GM12878 (cell line): ENCODE measurements at regions of chr4 and their contacts with region 1.

Region 1: DNA sequence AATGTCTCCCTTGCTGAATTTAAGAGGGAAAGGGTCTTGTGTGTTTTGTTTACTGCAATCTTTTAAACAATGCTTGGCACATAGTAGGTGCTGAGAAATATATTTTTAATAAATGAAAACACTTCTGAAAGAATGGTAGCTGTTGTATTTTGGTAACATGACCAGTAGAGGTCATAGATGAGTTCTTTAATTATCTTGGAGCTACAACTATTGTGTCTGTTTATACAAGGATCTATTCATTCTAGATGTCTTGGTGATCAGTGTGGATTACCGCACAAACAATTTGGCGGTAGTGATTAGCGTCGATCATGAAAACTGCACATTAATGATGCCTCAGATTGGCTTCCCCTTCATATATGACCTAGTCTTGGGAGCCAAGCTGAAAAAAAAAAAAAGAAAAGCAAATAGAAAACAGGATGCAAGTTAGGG is 21.4 kb upstream of the SCRG1 start:
- DNase-seq: no peak
- ATAC-seq: peak; percentile 71
- H3K4me3 ChIP-seq: no peak overlapping the region
- H3K27ac ChIP-seq: no peak overlapping the region
- H3K4me1 ChIP-seq: no peaks in the 10 kb centered on the region
- H3K27me3 ChIP-seq: no peaks in the 10 kb centered on the region
- CTCF ChIP-seq: peak; percentile 21 to 48 (median 39); a peak in 2 of 6 replicates
- EP300 ChIP-seq: no peak
- POLR2A ChIP-seq: no peak
- RAD21 ChIP-seq: peak; percentile 57

Region 2: DNA sequence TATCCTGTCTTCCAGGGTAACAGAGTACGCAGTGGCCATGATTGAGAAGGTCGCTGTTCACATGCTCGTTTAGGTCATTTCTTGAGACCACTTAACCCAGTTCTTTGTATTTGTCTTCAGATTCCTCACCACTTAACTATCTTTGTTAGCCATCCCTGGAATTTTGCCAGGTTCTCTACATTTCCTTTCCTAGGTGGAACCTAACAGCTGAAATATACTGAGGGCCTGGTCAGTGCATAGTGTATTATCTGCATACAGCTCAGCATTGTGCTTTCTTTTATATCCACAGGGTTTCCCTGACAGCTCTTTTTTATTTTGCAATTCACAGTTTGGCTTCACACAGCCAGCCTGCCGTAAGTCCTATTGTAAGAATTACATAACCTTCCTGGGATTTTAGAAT is 400.6 kb before region 1 on chr4:
- CTCF ChIA-PET with region 1: interaction called, 15 read pairs
- POLR2A ChIA-PET with region 1: no interaction called
- RAD21 ChIA-PET with region 1: interaction called, 4 read pairs
- SMC1A ChIA-PET with region 1: interaction called, 4 read pairs
- in situ Hi-C with region 1: loop called (anchors 5 kb)
- intact Hi-C with region 1: loop called (anchors 1 kb)
- DNase-seq: no peak
- ATAC-seq: no peak
- H3K4me3 ChIP-seq: no peak overlapping the region
- H3K27ac ChIP-seq: no peak overlapping the region
- H3K4me1 ChIP-seq: no peaks in the 10 kb centered on the region
- H3K27me3 ChIP-seq: no peaks in the 10 kb centered on the region; a peak in 1 of 4 replicates
- CTCF ChIP-seq: no peak
- EP300 ChIP-seq: no peak
- POLR2A ChIP-seq: no peak
- RAD21 ChIP-seq: no peak

Region 3: GRCh38 chr4:173288296-173288695 is 132.0 kb before region 1 on chr4:
- CTCF ChIA-PET with region 1: interaction called, 9 read pairs
- POLR2A ChIA-PET with region 1: no interaction called
- RAD21 ChIA-PET with region 1: interaction called, 4 read pairs
- SMC1A ChIA-PET with region 1: interaction called, 7 read pairs
- in situ Hi-C with region 1: no loop called
- intact Hi-C with region 1: loop called (anchors 1 kb)
- DNase-seq: peak; percentile 24
- ATAC-seq: peak; percentile 88
- H3K4me3 ChIP-seq: no peak overlapping the region
- H3K27ac ChIP-seq: no peak overlapping the region
- H3K4me1 ChIP-seq: peaks cover 5% of the 10 kb centered on the region; the same call in 1 of the 2 replicates
- H3K27me3 ChIP-seq: no peaks in the 10 kb centered on the region
- CTCF ChIP-seq: peak; percentile 60 to 67 (median 65)
- EP300 ChIP-seq: no peak
- POLR2A ChIP-seq: no peak
- RAD21 ChIP-seq: peak; percentile 63

Region 4: GRCh38 chr4:173318648-173319211 is 101.6 kb before region 1 on chr4:
- CTCF ChIA-PET with region 1: interaction called, 113 read pairs
- POLR2A ChIA-PET with region 1: interaction called, 3 read pairs
- RAD21 ChIA-PET with region 1: interaction called, 60 read pairs
- SMC1A ChIA-PET with region 1: interaction called, 84 read pairs
- in situ Hi-C with region 1: loop called (anchors 5 kb)
- intact Hi-C with region 1: loop called (anchors 1 kb)
- DNase-seq: no peak
- ATAC-seq: peak; percentile 51; the same call in 2 of the 3 replicates
- H3K4me3 ChIP-seq: no peak overlapping the region
- H3K27ac ChIP-seq: no peak overlapping the region
- H3K4me1 ChIP-seq: no peaks in the 10 kb centered on the region; the same call in 1 of the 2 replicates
- H3K27me3 ChIP-seq: no peaks in the 10 kb centered on the region
- CTCF ChIP-seq: peak in 1 of 3 experiments; percentile 14; a peak in 3 of 6 replicates
- EP300 ChIP-seq: no peak
- POLR2A ChIP-seq: no peak
- RAD21 ChIP-seq: peak; percentile 45

Region 5: DNA sequence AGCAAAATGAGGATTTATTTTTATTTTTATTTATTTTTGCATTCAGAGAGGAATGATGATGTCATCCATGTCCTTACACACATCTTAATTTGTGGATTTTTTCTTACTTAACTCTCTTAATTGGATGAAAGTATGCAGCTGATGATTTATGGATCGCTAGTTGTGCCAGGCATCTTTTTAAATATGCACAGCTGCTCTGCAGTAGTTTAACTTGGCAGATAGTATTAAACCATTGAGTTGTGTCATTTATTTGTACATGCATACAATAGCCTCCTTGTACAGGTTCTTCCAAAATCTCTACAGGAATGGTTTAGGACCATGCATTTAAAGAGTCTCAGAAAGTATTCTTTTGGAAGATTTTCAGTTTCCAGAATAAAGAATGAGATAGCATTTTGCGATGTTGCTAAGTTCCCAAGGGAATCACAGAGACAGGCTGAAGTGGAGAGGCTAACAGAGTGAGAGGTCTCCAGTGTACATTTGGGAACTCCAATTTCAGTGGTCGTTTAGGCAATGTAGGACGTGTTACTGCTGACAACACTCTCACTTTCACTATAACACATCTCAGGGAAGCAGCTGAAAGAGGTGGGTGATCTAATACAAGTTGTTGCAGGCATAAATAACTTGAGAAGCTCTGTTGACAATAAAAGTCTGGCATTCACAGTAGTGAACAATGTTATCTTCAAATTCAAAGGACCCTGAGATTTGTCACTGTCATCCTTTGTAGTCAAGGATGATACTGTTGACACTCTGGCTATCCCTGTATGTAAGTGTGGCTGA is 28.5 kb after region 1 on chr4:
- CTCF ChIA-PET with region 1: interaction called, 25 read pairs
- POLR2A ChIA-PET with region 1: no interaction called
- RAD21 ChIA-PET with region 1: no interaction called
- SMC1A ChIA-PET with region 1: no interaction called
- in situ Hi-C with region 1: no loop called
- intact Hi-C with region 1: no loop called
- DNase-seq: no peak
- ATAC-seq: peak; percentile 68; the same call in 2 of the 3 replicates
- H3K4me3 ChIP-seq: no peak overlapping the region
- H3K27ac ChIP-seq: no peak overlapping the region
- H3K4me1 ChIP-seq: no peaks in the 10 kb centered on the region
- H3K27me3 ChIP-seq: no peaks in the 10 kb centered on the region
- CTCF ChIP-seq: no peak
- EP300 ChIP-seq: no peak
- POLR2A ChIP-seq: no peak
- RAD21 ChIP-seq: no peak

Region 6: GRCh38 chr4:174318829-174319764 is 898.8 kb after region 1 on chr4:
- CTCF ChIA-PET with region 1: interaction called, 7 read pairs
- POLR2A ChIA-PET with region 1: no interaction called
- RAD21 ChIA-PET with region 1: no interaction called
- SMC1A ChIA-PET with region 1: no interaction called
- in situ Hi-C with region 1: no loop called
- intact Hi-C with region 1: loop called (anchors 5 kb)
- DNase-seq: no peak
- ATAC-seq: peak; percentile 55
- H3K4me3 ChIP-seq: no peak overlapping the region
- H3K27ac ChIP-seq: no peak overlapping the region
- H3K4me1 ChIP-seq: no peaks in the 10 kb centered on the region
- H3K27me3 ChIP-seq: no peaks in the 10 kb centered on the region
- CTCF ChIP-seq: peak; percentile 42 to 67 (median 46); a peak in 5 of 6 replicates
- EP300 ChIP-seq: no peak
- POLR2A ChIP-seq: no peak
- RAD21 ChIP-seq: peak; percentile 76